ENCODE measurements at regions of chr3 and their contacts with region 1.

Region 1: GRCh38 chr3:38579551-38580449 is 69.7 kb downstream of the SCN5A start:
- DNase-seq: peak; percentile 78

Region 2: GRCh38 chr3:38528457-38528856 is 51.3 kb before region 1 on chr3:
- intact Hi-C with region 1: no loop called
- DNase-seq: no peak

Region 3: DNA sequence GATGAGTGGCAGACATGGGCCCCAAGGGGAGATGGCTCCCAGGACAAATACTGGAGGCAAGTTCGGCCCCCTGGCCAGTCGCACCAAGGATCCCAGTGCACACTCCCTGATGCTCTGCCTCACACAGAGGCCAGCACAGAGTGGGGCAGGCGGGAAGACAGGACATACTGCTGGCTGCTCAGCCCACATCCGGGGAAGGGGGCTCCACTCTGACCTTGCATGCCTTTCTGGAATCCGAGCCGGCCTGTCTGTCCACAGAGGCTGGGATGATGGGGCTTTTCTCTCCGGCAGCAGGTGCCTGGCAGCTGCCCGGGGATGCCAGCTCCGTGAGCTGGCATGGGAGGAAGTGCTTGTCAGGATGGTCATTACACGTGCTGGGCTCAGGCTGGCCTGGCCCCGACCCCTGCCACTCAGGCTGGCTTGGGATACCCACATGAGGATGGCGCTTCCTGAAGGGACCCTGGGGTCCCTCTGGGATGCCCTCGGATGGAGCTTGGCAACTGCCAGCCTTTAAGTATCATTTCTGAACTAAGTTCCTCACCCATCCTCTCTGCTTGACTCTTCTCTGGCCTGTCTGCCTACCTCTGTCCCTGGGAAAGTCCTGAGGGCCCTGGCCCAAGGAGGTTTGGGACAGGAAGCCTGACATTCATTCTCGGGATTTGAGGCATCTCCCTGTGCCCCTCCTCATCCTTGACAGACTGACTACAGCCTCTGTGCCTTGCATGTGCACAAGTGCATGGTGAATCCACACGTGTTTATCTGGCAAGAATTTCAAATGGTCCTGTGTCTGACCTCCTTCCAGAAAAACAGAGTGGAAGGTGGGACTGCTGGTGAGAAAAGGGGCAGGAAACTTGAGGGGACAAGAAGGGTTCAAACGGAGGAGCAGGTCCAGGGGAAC is 37.1 kb before region 1 on chr3:
- intact Hi-C with region 1: loop called (anchors 1 kb)
- DNase-seq: peak; percentile 77